GM23248 (cell line): ENCODE measurements at regions of chr1 and their contacts with region 1.

Region 1: GRCh38 chr1:89804642-89805237 is 16.1 kb upstream of the LRRC8D start:
- DNase-seq: peak; percentile 83
- H3K4me3 ChIP-seq: no peak overlapping the region
- H3K27ac ChIP-seq: no peak overlapping the region
- H3K4me1 ChIP-seq: peaks cover 21% of the 10 kb centered on the region
- H3K27me3 ChIP-seq: no peaks in the 10 kb centered on the region

Region 2: DNA sequence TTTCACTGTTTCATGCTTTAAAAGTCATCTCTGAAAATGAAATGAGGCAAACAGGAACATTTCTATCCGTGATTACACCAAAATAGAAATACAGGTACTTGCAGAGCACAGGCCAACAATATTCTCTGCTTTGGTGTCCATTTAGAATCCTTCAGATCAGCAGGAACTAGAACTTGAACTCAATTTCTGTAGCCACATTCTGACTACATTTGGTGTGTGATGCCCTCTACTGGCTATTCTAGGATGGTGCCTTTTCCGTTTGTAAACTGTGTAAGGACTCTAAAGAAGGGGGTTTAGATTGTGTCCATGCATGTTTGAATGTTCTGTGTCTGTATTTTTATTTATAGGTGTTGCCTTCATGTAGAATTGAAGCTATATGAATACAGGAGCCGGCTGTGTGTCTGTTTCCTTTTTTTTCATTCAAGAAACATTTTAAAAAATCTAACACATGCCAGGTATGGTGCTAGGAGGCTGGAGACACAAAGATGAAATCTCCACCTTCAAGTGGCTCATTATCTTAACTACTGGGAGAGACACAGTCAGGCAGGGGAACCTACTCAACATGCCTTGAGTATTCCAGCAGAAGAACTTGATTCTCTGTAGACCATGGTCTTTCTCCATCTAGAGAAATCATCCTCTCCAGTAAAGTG is 182.6 kb after region 1 on chr1:
- in situ Hi-C with region 1: loop called (anchors 5 kb)
- DNase-seq: peak; percentile 81
- H3K4me3 ChIP-seq: no peak overlapping the region
- H3K27ac ChIP-seq: no peak overlapping the region
- H3K4me1 ChIP-seq: no peaks in the 10 kb centered on the region
- H3K27me3 ChIP-seq: no peaks in the 10 kb centered on the region